Left ventricle myocardium inferior (tissue), 1 donor: ENCODE measurements at regions of chr18 and their contacts with region 1.

Region 1: DNA sequence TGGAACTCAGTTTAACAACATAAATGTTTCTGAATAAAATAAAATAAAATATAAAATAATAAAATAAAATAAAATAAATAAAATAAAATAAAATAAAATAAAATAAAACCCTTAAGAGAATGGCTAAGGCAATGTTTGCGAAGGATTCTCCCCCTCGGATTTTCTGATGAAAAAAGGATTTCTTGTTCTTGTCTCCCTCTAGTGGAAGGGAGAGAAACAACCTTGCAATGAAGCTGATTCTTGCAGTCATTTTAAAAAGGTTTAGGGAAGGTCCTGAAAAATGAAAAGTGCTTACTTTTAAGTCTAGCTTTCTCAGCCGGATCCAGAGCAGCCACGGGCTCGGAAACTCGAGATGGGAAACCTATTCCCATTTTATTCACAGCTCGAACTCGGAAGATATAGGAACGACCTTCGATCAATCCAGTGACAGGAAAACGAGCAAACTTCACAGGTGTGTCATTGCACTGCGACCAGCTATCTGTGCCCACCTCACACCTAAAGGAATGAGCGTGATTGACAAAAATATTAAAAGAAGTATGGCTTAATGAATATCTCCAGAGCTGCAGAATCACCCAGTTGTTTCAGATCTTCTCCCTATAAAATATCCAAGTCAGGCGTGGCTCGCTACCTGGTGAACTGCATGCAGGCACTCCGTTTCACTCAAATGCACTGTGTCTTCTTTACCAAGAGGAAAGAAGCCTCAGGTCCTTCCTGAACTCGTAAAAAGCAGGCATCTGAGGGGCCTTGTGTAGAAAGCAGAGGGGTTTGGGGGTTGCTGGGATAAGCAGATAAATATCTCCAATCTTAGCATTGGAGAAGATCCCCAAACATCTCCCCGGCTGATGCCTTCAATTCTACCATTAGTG is 68.1 kb downstream of the MYOM1 start:
- DNase-seq: no peak
- H3K4me3 ChIP-seq: no peak overlapping the region
- H3K27ac ChIP-seq: peak overlapping the region; percentile 48
- H3K4me1 ChIP-seq: peaks cover 52% of the 10 kb centered on the region
- H3K27me3 ChIP-seq: no peaks in the 10 kb centered on the region
- CTCF ChIP-seq: peak; percentile 78

Region 2: GRCh38 chr18:3245853-3246634 is 94.4 kb after region 1 on chr18:
- intact Hi-C with region 1: loop called (anchors 10 kb)
- DNase-seq: peak; percentile 89
- H3K4me3 ChIP-seq: peak overlapping the region; percentile 98
- H3K27ac ChIP-seq: peak overlapping the region; percentile 100
- H3K4me1 ChIP-seq: peaks cover 62% of the 10 kb centered on the region
- H3K27me3 ChIP-seq: no peaks in the 10 kb centered on the region
- CTCF ChIP-seq: peak; percentile 98

Region 3: DNA sequence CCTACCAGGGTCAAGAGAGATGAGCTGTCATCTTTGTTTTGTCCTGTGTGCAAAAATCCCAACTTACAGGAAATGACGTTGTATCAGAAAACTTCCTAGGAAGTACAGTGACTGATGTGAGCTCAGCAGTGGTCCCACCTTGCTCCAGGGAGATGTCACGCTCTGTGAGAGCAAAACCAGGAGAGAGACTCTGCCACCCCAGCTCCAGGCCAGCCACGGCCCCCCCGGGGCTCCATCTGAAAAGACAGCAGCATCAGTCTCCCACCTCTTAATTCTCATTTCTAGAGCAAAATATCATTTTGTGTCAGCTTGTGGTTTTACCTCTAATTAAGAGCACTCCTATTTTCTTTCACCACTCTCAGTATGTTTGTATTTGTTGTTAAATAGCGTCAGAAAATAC is 167.8 kb after region 1 on chr18:
- intact Hi-C with region 1: no loop called
- DNase-seq: no peak
- H3K4me3 ChIP-seq: no peak overlapping the region
- H3K27ac ChIP-seq: no peak overlapping the region
- H3K4me1 ChIP-seq: no peaks in the 10 kb centered on the region
- H3K27me3 ChIP-seq: no peaks in the 10 kb centered on the region
- CTCF ChIP-seq: no peak